ENCODE measurements at regions of chr17 and their contacts with region 1.

Region 1: DNA sequence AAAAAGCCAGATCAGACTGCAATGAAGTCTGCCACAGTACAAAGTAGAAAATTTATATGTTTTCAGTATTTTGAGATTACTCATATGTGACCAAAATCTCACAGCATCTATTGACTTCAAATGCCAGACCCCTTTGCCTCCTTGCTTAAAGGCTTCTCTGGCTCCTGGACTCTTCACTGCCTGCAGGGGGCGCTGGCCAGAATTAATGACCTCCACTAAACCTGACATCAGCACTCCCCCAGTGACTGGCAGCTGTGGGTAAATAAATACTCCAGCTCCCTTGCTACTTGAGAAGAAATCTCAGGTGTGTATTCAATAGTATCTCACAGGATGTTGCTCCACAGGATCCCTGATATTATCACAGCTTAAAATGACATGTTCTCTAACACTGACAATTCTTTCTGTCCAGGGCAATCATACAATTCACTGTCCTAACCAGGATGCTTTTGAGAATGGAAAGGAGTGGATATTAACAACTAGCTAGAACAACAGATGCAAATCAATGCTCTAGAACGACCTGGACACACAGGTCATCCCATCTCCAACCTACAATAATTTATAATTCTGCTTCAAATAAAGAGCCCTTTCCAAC is 4.0 kb downstream of the BECN1 start:
- DNase-seq: peak; percentile 69 to 86 (median 83)
- H3K4me3 ChIP-seq: no peak overlapping the region
- H3K27ac ChIP-seq: no peak overlapping the region
- H3K4me1 ChIP-seq: peaks cover 0 to 14% (median 11%) of the 10 kb centered on the region in 4 experiments
- H3K27me3 ChIP-seq: no peaks in the 10 kb centered on the region

Region 2: DNA sequence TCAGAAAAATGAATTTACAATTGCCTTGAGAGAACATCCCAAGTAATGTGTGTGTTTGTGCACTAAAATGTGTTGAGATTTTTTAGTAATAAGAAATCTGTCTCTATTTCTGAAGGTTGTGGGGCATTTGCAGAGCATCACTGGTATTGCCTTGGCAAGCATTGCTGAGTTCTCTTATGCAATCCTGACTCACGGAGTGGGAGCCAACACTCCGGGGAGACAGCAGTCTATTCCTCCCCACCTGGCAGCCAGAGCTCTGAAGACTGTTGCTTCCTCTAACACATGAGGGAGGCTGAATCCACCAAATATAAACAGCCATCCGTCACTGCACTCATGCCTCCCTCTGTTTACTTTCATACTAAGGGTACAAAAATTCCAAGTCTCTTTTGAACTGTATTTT is 10.8 kb before region 1 on chr17:
- CTCF ChIA-PET with region 1: interaction called, 51 read pairs
- POLR2A ChIA-PET with region 1: interaction called, 3 read pairs
- DNase-seq: no peak
- H3K4me3 ChIP-seq: no peak overlapping the region
- H3K27ac ChIP-seq: no peak overlapping the region
- H3K4me1 ChIP-seq: no peaks in the 10 kb centered on the region
- H3K27me3 ChIP-seq: no peaks in the 10 kb centered on the region

Region 3: GRCh38 chr17:42832974-42833766 is 13.1 kb after region 1 on chr17 and contains the start of gene PSME3:
- CTCF ChIA-PET with region 1: interaction called, 17 read pairs
- POLR2A ChIA-PET with region 1: interaction called, 3 read pairs
- DNase-seq: peak; percentile 90 to 94 (median 90)
- H3K4me3 ChIP-seq: peak within 1 kb of the TSS; percentile 83 to 98 (median 85)
- H3K27ac ChIP-seq: peak within 1 kb of the TSS; percentile 90 to 92
- H3K4me1 ChIP-seq: peaks cover 13 to 21% (median 17%) of the 10 kb centered on the region in 4 experiments
- H3K27me3 ChIP-seq: no peaks in the 10 kb centered on the region

Region 4: DNA sequence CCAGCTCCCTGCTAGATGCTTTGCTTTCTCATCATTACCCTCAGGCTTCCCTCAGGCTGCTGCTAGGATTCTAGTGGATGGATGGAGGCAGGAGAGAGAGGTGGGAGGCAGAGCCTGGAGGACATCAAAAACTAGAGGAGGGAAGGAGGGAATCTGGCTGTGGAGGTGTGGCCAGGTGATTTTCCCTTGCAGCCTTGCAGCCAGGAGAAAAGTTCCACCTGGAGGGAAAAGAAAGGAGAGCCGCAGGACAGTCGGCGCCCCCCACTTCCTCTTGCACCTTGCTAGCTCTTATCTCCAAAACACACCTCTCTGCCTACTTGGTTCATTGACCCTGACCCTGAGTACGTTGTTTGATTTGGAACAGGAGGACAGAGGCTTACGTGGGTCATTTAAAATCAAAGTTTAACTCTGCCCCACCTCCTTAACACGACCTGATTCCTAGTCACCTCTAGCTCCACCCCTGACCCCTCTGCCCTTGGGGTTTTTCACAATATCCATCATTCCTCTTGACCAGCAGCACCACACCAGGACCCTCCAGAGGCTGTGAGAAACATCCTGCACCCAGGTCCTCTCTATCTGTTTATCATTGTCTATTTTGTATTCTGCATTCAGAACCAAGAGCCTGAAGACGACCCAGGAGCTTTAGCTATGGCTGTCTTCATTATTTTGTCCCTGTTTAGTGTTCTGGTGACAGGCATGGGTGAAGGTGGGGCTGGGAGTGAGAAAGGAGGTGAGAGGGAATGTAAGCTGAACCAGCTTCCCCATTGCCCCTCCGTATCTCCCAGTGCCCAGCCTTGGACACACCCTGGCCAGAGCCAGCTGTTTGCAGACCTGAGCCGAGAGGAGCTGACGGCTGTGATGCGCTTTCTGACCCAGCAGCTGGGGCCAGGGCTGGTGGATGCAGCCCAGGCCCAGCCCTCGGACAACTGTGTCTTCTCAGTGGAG is 46.9 kb after region 1 on chr17:
- CTCF ChIA-PET with region 1: no interaction called
- POLR2A ChIA-PET with region 1: no interaction called
- DNase-seq: no peak
- H3K4me3 ChIP-seq: no peak overlapping the region
- H3K27ac ChIP-seq: no peak overlapping the region
- H3K4me1 ChIP-seq: no peaks in the 10 kb centered on the region
- H3K27me3 ChIP-seq: no peaks in the 10 kb centered on the region